ENCODE measurements at regions of chr10 and their contacts with region 1.

Region 1: DNA sequence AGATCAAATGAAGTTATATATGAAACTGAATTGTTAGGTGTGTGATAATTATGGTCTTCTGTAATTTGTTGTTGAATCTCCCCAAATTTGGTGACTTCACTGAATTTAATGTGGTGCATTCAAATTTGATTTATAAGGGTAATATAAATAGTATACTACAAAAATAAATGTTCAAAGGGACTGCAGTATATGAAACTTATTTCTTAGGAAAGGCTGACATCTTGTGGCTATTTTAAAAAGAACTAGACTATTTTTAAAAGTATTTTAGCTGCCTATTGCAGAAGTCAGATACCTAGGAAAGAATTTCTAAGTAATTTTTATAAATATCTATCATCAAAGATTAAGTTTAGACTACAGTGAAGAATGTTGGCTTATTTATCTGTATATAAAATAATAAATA is 36.6 kb downstream of the ATRNL1 start:
- DNase-seq: peak; percentile 43
- ATAC-seq: peak; percentile 58
- H3K4me3 ChIP-seq: no peak overlapping the region
- H3K27ac ChIP-seq: no peak overlapping the region
- H3K4me1 ChIP-seq: no peaks in the 10 kb centered on the region
- H3K27me3 ChIP-seq: no peaks in the 10 kb centered on the region
- CTCF ChIP-seq: peak in 2 of 3 experiments; percentile 52 to 55; a peak in 3 of 6 replicates
- POLR2A ChIP-seq: no peak
- RAD21 ChIP-seq: peak; percentile 79

Region 2: GRCh38 chr10:113704637-113705343 is 1425.0 kb before region 1 on chr10:
- CTCF ChIA-PET with region 1: no interaction called
- POLR2A ChIA-PET with region 1: no interaction called
- RAD21 ChIA-PET with region 1: no interaction called
- intact Hi-C with region 1: loop called (anchors 10 kb)
- DNase-seq: peak; percentile 38
- ATAC-seq: peak; percentile 82
- H3K4me3 ChIP-seq: no peak overlapping the region
- H3K27ac ChIP-seq: no peak overlapping the region
- H3K4me1 ChIP-seq: no peaks in the 10 kb centered on the region
- H3K27me3 ChIP-seq: no peaks in the 10 kb centered on the region
- CTCF ChIP-seq: peak; percentile 72 to 87 (median 80)
- POLR2A ChIP-seq: no peak
- RAD21 ChIP-seq: peak; percentile 84

Region 3: GRCh38 chr10:113802997-113803396 is 1326.8 kb before region 1 on chr10:
- CTCF ChIA-PET with region 1: no interaction called
- POLR2A ChIA-PET with region 1: no interaction called
- RAD21 ChIA-PET with region 1: no interaction called
- intact Hi-C with region 1: loop called (anchors 5 kb)
- DNase-seq: no peak
- ATAC-seq: no peak
- H3K4me3 ChIP-seq: no peak overlapping the region
- H3K27ac ChIP-seq: no peak overlapping the region
- H3K4me1 ChIP-seq: no peaks in the 10 kb centered on the region
- H3K27me3 ChIP-seq: peaks cover 6% of the 10 kb centered on the region; the same call in 1 of the 2 replicates
- CTCF ChIP-seq: no peak
- POLR2A ChIP-seq: no peak
- RAD21 ChIP-seq: no peak

Region 4: DNA sequence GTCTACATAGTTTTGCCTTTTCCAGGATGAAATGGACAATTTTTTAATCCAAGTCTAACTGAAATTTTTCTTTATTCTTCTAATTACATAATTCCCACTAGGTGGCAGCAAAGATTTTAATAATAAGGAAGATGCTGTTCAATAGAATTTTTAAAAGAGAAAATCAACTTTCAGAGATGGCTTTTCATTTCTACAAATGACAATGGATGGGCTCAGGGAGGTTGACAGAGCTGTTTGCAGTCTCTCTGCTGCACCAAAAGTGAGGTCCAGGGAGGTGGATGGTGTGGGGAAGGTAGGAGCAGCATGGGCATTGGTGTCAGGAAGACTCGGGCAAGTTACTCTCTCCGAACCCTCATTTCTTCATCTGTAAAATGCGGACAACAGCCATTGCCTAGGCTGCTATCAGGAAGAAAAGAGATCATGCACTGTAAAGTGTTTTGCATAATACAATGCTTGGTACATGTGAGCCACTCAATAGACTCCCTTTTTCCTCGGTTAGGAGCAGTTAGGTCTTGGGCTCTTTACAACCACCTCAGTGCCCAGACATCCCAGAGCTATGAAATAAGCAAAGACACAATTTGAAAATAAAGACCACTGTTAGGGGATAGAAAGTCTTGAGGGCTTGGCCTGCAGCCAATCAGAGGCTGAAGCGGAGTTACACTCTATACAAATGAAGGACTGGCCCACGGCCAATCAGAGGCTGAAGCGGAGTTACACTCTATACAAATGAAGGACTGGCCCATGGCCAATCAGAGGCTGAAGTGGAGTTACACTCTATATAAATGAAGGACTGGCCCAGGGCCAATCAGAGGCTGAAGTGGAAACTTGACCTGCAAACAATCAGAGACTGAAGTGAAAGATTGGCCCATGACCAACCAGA is 578.8 kb before region 1 on chr10:
- CTCF ChIA-PET with region 1: interaction called, 24 read pairs
- POLR2A ChIA-PET with region 1: no interaction called
- RAD21 ChIA-PET with region 1: no interaction called
- intact Hi-C with region 1: loop called (anchors 1 kb)
- DNase-seq: peak; percentile 32
- ATAC-seq: no peak
- H3K4me3 ChIP-seq: no peak overlapping the region
- H3K27ac ChIP-seq: no peak overlapping the region
- H3K4me1 ChIP-seq: no peaks in the 10 kb centered on the region; a peak in 1 of 4 replicates
- H3K27me3 ChIP-seq: no peaks in the 10 kb centered on the region
- CTCF ChIP-seq: peak; percentile 11 to 95 (median 78); a peak in 4 of 6 replicates
- POLR2A ChIP-seq: no peak
- RAD21 ChIP-seq: peak; percentile 91

Region 5: DNA sequence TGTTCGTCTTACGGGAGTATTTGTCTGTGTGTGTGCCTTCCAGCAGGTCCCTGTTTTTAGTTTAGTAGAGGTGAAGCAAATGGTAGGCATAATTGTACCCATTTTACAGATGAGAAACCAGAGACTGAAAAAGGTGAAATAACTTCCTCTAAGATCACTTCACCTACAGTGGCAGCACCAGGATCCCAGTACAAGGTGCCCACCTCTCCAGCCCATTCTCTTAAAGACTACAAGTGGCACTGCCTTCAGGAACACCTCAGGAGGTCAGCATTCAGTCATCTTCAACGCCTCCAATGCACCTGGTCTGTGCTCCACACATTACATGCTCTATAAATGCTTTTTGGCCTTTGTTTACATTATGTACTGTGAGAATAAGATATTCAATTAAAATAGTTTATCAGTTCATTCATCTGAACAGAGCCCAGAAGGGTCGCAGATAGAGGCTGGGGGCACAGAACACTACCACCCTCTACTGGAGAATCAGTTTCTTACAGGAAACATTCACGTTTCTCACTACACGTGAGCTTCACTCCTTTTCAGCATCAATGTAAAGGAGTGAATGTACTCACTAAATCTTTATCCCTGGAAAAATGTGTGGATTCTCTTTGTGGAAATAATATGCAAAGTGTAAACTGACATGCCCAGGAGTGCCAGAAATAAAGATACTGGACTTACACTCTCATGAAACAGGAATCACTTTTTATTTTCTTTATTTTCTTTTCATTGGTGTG is 426.2 kb before region 1 on chr10:
- CTCF ChIA-PET with region 1: interaction called, 7 read pairs
- POLR2A ChIA-PET with region 1: no interaction called
- RAD21 ChIA-PET with region 1: no interaction called
- intact Hi-C with region 1: loop called (anchors 5 kb)
- DNase-seq: no peak
- ATAC-seq: peak; percentile 90
- H3K4me3 ChIP-seq: no peak overlapping the region
- H3K27ac ChIP-seq: no peak overlapping the region
- H3K4me1 ChIP-seq: peaks cover 0 to 4% of the 10 kb centered on the region in 2 experiments; a peak in 2 of 4 replicates
- H3K27me3 ChIP-seq: no peaks in the 10 kb centered on the region
- CTCF ChIP-seq: peak; percentile 84 to 95 (median 88)
- POLR2A ChIP-seq: no peak
- RAD21 ChIP-seq: peak; percentile 90

Region 6: DNA sequence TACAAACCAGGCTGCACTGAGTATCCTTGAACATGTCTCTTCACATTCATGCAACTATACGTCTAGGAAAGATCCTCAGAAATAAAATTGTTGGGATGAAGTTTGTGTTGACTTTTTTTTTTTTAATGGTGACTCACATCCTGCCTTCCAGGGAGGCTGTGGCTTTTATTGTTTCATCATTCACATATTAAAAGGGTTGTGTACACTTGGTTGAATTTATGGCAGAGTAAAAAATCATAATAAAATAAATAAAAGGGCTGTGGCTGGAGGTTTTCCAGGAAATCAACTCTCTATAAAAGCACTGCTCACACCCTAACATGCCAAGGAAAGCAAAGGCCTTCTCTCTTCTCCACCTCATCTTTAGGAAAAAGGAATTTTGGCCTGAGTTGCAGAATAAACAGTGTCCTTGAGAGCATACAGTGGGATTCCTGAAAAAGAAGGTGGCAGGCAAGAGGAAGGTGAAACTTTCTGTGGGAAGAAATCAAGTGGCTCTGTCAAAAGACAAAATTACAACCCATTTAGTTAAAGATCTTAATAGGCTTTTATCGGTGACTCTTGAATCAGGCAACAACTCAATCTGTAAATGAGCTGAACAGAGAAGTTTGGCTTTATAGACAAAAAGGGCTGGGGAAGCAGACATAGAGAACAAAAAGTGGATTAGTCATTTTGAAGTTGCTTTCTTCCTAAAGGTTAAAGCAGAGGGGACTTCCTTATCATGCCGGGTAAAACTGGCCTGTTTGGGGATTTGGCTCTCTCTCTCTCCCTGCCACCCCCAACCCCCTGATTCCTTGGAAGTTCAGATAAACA is 349.7 kb before region 1 on chr10:
- CTCF ChIA-PET with region 1: interaction called, 3 read pairs
- POLR2A ChIA-PET with region 1: no interaction called
- RAD21 ChIA-PET with region 1: no interaction called
- intact Hi-C with region 1: loop called (anchors 10 kb)
- DNase-seq: peak; percentile 76
- ATAC-seq: peak; percentile 82
- H3K4me3 ChIP-seq: peak overlapping the region in 1 of 2 experiments; percentile 14; a peak in 1 of 4 replicates
- H3K27ac ChIP-seq: peak overlapping the region; percentile 49
- H3K4me1 ChIP-seq: peaks cover 26 to 27% of the 10 kb centered on the region in 2 experiments
- H3K27me3 ChIP-seq: no peaks in the 10 kb centered on the region
- CTCF ChIP-seq: no peak
- POLR2A ChIP-seq: no peak
- RAD21 ChIP-seq: peak; percentile 39; the same call in 1 of the 2 replicates

Region 7: GRCh38 chr10:114876602-114877300 is 253.0 kb before region 1 on chr10:
- CTCF ChIA-PET with region 1: interaction called, 84 read pairs
- POLR2A ChIA-PET with region 1: interaction called, 3 read pairs
- RAD21 ChIA-PET with region 1: interaction called, 4 to 8 read pairs
- intact Hi-C with region 1: loop called (anchors 1 kb)
- DNase-seq: peak; percentile 74
- ATAC-seq: peak; percentile 94
- H3K4me3 ChIP-seq: no peak overlapping the region
- H3K27ac ChIP-seq: no peak overlapping the region
- H3K4me1 ChIP-seq: peaks cover 0 to 13% of the 10 kb centered on the region in 2 experiments; a peak in 1 of 4 replicates
- H3K27me3 ChIP-seq: no peaks in the 10 kb centered on the region
- CTCF ChIP-seq: peak; percentile 95 to 97 (median 96)
- POLR2A ChIP-seq: no peak
- RAD21 ChIP-seq: peak; percentile 96